SK-N-SH (cell line): ENCODE measurements at regions of chr5 and their contacts with region 1.

Region 1: GRCh38 chr5:141320225-141321169 is at the start of gene TAF7:
- DNase-seq: peak; percentile 94
- H3K4me3 ChIP-seq: peak within 1 kb of the TSS; percentile 80 to 92
- H3K27ac ChIP-seq: peak within 1 kb of the TSS; percentile 96 to 98
- H3K4me1 ChIP-seq: no peaks in the 10 kb centered on the region; a peak in 1 of 4 replicates
- H3K27me3 ChIP-seq: no peaks in the 10 kb centered on the region
- CTCF ChIP-seq: peak; percentile 90
- EP300 ChIP-seq: 0 out of 4 replicates have a peak, but pooled peaks of 1 of the 2 experiments have one; percentile 31
- RAD21 ChIP-seq: peak; percentile 60
- polyA plus RNA-seq, gene TAF7: 30.6 and 38.7 TPM in 2 replicates

Region 2: GRCh38 chr5:141298376-141298775 is 22.1 kb before region 1 on chr5:
- CTCF ChIA-PET with region 1: interaction called, 11 read pairs
- POLR2A ChIA-PET with region 1: no interaction called
- DNase-seq: no peak
- H3K4me3 ChIP-seq: no peak overlapping the region
- H3K27ac ChIP-seq: no peak overlapping the region
- H3K4me1 ChIP-seq: no peaks in the 10 kb centered on the region
- H3K27me3 ChIP-seq: no peaks in the 10 kb centered on the region
- CTCF ChIP-seq: no peak
- EP300 ChIP-seq: no peak
- RAD21 ChIP-seq: no peak